IMR-90 (cell line): ENCODE measurements at regions of chr10 and their contacts with region 1.

Region 1: DNA sequence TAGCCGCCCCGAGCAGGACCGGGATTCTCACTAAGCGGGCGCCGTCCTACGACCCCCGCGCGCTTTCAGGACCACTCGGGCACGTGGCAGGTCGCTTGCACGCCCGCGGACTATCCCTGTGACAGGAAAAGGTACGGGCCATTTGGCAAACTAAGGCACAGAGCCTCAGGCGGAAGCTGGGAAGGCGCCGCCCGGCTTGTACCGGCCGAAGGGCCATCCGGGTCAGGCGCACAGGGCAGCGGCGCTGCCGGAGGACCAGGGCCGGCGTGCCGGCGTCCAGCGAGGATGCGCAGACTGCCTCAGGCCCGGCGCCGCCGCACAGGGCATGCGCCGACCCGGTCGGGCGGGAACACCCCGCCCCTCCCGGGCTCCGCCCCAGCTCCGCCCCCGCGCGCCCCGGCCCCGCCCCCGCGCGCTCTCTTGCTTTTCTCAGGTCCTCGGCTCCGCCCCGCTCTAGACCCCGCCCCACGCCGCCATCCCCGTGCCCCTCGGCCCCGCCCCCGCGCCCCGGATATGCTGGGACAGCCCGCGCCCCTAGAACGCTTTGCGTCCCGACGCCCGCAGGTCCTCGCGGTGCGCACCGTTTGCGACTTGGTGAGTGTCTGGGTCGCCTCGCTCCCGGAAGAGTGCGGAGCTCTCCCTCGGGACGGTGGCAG is at the start of gene MGMT:
- DNase-seq: peak; percentile 76
- ATAC-seq: peak; percentile 99
- H3K4me3 ChIP-seq: peak within 1 kb of the TSS; percentile 91
- H3K27ac ChIP-seq: peak within 1 kb of the TSS; percentile 73
- H3K4me1 ChIP-seq: peaks cover 4% of the 10 kb centered on the region; the same call in 1 of the 2 replicates
- H3K27me3 ChIP-seq: no peaks in the 10 kb centered on the region; the same call in 1 of the 2 replicates
- CTCF ChIP-seq: no peak
- POLR2A ChIP-seq: peak; percentile 26; the same call in 1 of the 2 replicates
- RAD21 ChIP-seq: no peak
- total RNA-seq, gene MGMT: 11.1 and 11.5 TPM in 2 replicates

Region 2: GRCh38 chr10:129642427-129642826 is 175.6 kb after region 1 on chr10:
- CTCF ChIA-PET with region 1: no interaction called
- POLR2A ChIA-PET with region 1: no interaction called
- dilution Hi-C with region 1: no loop called
- in situ Hi-C with region 1: no loop called
- intact Hi-C with region 1: no loop called
- DNase-seq: no peak
- ATAC-seq: no peak
- H3K4me3 ChIP-seq: no peak overlapping the region
- H3K27ac ChIP-seq: no peak overlapping the region
- H3K4me1 ChIP-seq: no peaks in the 10 kb centered on the region
- H3K27me3 ChIP-seq: no peaks in the 10 kb centered on the region
- CTCF ChIP-seq: no peak
- POLR2A ChIP-seq: no peak
- RAD21 ChIP-seq: no peak

Region 3: GRCh38 chr10:129963641-129964501 is 497.0 kb after region 1 on chr10 and contains the start of gene EBF3:
- CTCF ChIA-PET with region 1: no interaction called
- POLR2A ChIA-PET with region 1: no interaction called
- dilution Hi-C with region 1: no loop called
- in situ Hi-C with region 1: no loop called
- intact Hi-C with region 1: loop called (anchors 5 kb)
- DNase-seq: peak; percentile 50
- ATAC-seq: peak; percentile 87
- H3K4me3 ChIP-seq: peak within 1 kb of the TSS; percentile 39
- H3K27ac ChIP-seq: peak within 1 kb of the TSS; percentile 12; the same call in 1 of the 2 replicates
- H3K4me1 ChIP-seq: no peaks in the 10 kb centered on the region; the same call in 1 of the 2 replicates
- H3K27me3 ChIP-seq: peaks cover 74% of the 10 kb centered on the region
- CTCF ChIP-seq: no peak
- POLR2A ChIP-seq: no peak
- RAD21 ChIP-seq: no peak
- total RNA-seq, gene EBF3: 0.36 and 0.56 TPM in 2 replicates

Region 4: GRCh38 chr10:130027716-130028464 is 561.1 kb after region 1 on chr10:
- CTCF ChIA-PET with region 1: no interaction called
- POLR2A ChIA-PET with region 1: interaction called, 10 read pairs
- dilution Hi-C with region 1: no loop called
- in situ Hi-C with region 1: no loop called
- intact Hi-C with region 1: no loop called
- DNase-seq: no peak
- ATAC-seq: no peak
- H3K4me3 ChIP-seq: no peak overlapping the region
- H3K27ac ChIP-seq: no peak overlapping the region
- H3K4me1 ChIP-seq: no peaks in the 10 kb centered on the region
- H3K27me3 ChIP-seq: no peaks in the 10 kb centered on the region
- CTCF ChIP-seq: no peak
- POLR2A ChIP-seq: no peak
- RAD21 ChIP-seq: no peak